ENCODE measurements at regions of chr19 and their contacts with region 1.

Region 1: DNA sequence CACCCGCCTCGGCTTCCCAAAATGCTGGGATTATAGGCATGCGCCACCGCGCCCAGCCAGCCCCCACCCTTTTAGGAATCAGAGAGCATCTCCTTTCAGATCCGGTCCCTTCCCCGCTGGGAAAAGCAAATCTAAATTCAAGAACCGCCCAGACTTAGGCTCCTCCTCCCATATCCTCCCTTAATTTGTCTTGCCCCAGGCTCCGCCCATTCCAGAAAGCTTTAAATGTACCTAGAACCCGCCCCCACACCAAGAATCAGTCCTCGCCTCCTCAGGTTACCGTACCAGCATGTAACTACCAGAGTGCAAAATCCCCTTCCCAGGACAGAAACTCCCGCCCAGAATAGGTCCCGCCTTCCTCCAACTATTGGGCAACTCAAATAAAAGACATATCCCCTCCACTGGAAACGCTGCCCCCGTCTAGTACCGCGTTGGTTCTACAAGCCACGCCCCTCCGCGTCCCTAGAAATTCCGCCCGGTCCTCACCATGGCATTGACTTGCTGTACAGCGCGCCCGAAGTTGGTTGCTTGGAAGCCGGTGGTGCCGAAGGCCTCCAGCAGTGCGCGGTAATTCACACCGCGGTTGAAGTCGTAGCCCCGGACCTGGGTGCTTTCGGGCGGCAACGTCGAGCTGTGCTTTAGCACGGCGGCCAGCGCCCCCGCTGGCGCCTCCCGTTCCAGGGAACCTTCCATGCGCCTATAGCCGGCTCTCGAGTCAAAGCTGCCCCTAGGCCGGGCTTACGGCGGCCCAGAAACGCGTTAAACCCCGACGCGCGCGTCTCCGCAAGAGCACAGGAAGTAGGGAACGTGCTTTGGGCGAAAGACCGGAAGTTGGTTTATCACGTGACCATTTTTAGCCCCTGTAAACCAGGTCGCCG is at the start of gene DHPS:
- DNase-seq: peak; percentile 76 to 99 (median 88)
- ATAC-seq: peak; percentile 78
- H3K4me3 ChIP-seq: peak within 1 kb of the TSS; percentile 93
- H3K4me3 Mint-ChIP-seq: peak within 1 kb of the TSS; percentile 94
- H3K27ac ChIP-seq: peak within 1 kb of the TSS; percentile 94 to 98
- H3K27ac Mint-ChIP-seq: peak within 1 kb of the TSS; percentile 86
- H3K4me1 ChIP-seq: peaks cover 40% of the 10 kb centered on the region
- H3K4me1 Mint-ChIP-seq: peaks cover 32% of the 10 kb centered on the region
- H3K27me3 ChIP-seq: no peaks in the 10 kb centered on the region
- H3K27me3 Mint-ChIP-seq: no peaks in the 10 kb centered on the region
- CTCF ChIP-seq: no peak
- total RNA-seq, gene DHPS: 112 to 113 TPM

Region 2: GRCh38 chr19:12166626-12167025 is 514.7 kb before region 1 on chr19:
- CTCF ChIA-PET with region 1: no interaction called
- POLR2A ChIA-PET with region 1: no interaction called
- intact Hi-C with region 1: no loop called
- DNase-seq: no peak
- ATAC-seq: no peak
- H3K4me3 ChIP-seq: no peak overlapping the region
- H3K4me3 Mint-ChIP-seq: peak overlapping the region; percentile 70
- H3K27ac ChIP-seq: no peak overlapping the region
- H3K27ac Mint-ChIP-seq: peak overlapping the region; percentile 89
- H3K4me1 ChIP-seq: peaks cover 38% of the 10 kb centered on the region
- H3K4me1 Mint-ChIP-seq: peaks cover 62% of the 10 kb centered on the region
- H3K27me3 ChIP-seq: no peaks in the 10 kb centered on the region
- H3K27me3 Mint-ChIP-seq: no peaks in the 10 kb centered on the region
- CTCF ChIP-seq: no peak

Region 3: DNA sequence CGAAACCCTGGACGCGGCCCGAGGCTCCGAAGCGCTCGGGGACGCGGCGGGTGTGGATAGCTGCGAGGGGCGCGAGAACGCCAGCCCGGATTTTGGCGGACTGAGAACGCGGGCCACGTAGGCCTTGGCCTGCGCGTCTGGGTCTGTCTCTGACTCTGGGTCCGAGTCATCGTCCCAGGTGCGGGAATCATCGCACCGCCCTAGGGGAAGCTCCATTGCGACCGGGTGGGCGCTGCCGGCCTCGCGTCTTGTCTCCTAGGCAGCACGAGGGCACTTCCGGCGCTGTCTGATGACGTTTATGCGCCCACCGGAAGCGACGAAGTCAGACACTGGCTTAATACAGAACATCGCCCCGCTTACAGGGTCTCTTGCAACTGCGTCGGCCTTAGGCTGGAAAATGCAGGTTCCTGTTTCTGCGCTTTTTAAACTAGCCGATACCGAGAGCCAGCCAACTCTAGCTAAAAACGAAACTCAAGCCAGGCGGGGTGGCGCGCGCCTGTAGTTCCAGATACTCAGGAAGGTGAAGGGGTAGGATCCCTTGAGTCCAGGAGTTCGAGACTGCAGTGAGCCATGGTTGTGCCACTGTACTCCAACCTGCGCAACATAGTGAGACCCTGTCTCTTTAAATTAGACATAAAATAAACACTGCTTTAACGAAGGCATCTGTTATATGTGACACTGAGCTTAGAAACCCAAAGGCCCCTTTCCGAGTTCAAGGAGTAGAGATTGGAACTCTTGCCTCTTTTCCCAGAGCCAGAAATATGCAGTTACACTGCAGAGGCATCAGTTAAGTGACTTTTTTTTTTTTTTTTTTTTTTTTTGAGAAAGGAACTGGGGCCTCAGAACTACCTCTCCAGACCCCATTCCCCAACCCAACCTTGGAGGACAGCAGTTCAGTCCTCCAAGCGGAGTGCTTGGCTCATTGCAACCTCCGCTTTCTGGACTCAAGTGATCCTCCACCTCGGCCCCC is 15.3 kb after region 1 on chr19 and contains the start of gene FBXW9:
- CTCF ChIA-PET with region 1: no interaction called
- POLR2A ChIA-PET with region 1: interaction called, 27 read pairs
- intact Hi-C with region 1: loop called (anchors 1 kb)
- DNase-seq: peak; percentile 93 to 99 (median 98)
- ATAC-seq: peak; percentile 89
- H3K4me3 ChIP-seq: peak within 1 kb of the TSS; percentile 98
- H3K4me3 Mint-ChIP-seq: peak within 1 kb of the TSS; percentile 92
- H3K27ac ChIP-seq: peak within 1 kb of the TSS; percentile 78 to 90
- H3K27ac Mint-ChIP-seq: peak within 1 kb of the TSS; percentile 95
- H3K4me1 ChIP-seq: peaks cover 23% of the 10 kb centered on the region
- H3K4me1 Mint-ChIP-seq: peaks cover 11% of the 10 kb centered on the region
- H3K27me3 ChIP-seq: no peaks in the 10 kb centered on the region
- H3K27me3 Mint-ChIP-seq: no peaks in the 10 kb centered on the region
- CTCF ChIP-seq: no peak
- total RNA-seq, gene FBXW9: 2.2 to 2.4 TPM

Region 4: GRCh38 chr19:12722566-12723380 is 41.5 kb after region 1 on chr19:
- CTCF ChIA-PET with region 1: interaction called, 8 read pairs
- POLR2A ChIA-PET with region 1: interaction called, 20 read pairs
- intact Hi-C with region 1: loop called (anchors 2 to 5 kb)
- DNase-seq: peak; percentile 80 to 99 (median 90)
- ATAC-seq: peak; percentile 87
- H3K4me3 ChIP-seq: peak overlapping the region; percentile 69
- H3K4me3 Mint-ChIP-seq: peak overlapping the region; percentile 98
- H3K27ac ChIP-seq: peak overlapping the region; percentile 48 to 78
- H3K27ac Mint-ChIP-seq: peak overlapping the region; percentile 89
- H3K4me1 ChIP-seq: peaks cover 39% of the 10 kb centered on the region
- H3K4me1 Mint-ChIP-seq: peaks cover 47% of the 10 kb centered on the region
- H3K27me3 ChIP-seq: no peaks in the 10 kb centered on the region
- H3K27me3 Mint-ChIP-seq: no peaks in the 10 kb centered on the region
- CTCF ChIP-seq: no peak

Region 5: DNA sequence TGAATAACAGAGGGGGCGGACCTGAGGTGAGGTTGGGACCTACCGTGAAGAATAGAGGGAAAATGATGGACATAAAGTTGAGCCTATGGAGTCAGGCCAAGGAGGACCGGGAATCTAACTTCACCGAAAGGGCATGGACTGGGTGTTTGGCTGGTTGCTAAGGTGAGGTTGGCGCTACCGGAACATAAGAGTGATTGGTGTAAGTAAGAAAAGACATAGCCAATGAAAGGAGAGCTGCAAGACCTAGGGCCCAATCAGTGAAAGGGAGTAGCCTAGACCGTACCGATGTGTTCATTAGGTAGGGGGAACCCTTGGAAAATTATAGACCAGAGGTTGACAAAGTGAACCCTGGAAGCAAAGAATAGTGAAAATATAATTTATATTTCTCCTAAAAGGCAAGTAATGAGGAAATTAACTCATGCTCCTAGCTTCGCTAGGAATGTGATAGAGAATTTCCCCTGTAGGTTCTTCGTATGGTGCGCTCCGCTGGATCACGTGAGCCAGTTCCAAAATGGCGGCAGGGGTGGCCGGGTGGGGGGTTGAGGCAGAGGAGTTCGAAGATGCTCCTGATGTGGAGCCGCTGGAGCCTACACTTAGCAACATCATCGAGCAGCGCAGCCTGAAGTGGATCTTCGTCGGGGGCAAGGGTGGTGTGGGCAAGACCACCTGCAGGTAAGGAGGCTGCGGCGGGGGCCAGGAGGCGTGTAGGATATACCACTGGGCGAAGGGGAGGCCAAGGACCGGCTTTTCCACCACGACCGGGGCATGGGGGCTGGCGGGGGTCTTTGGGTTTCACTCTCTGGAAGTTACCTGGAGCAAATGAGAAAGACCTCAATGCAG is 55.9 kb after region 1 on chr19 and contains the start of gene GET3:
- CTCF ChIA-PET with region 1: no interaction called
- POLR2A ChIA-PET with region 1: interaction called, 14 read pairs
- intact Hi-C with region 1: no loop called
- DNase-seq: peak; percentile 66 to 92 (median 74)
- ATAC-seq: peak; percentile 82
- H3K4me3 ChIP-seq: peak within 1 kb of the TSS; percentile 79
- H3K4me3 Mint-ChIP-seq: peak within 1 kb of the TSS; percentile 96
- H3K27ac ChIP-seq: peak within 1 kb of the TSS; percentile 76
- H3K27ac Mint-ChIP-seq: peak within 1 kb of the TSS; percentile 86
- H3K4me1 ChIP-seq: peaks cover 52% of the 10 kb centered on the region
- H3K4me1 Mint-ChIP-seq: peaks cover 38% of the 10 kb centered on the region
- H3K27me3 ChIP-seq: no peaks in the 10 kb centered on the region
- H3K27me3 Mint-ChIP-seq: no peaks in the 10 kb centered on the region
- CTCF ChIP-seq: no peak
- total RNA-seq, gene GET3: 13.9 to 14.5 TPM

Region 6: DNA sequence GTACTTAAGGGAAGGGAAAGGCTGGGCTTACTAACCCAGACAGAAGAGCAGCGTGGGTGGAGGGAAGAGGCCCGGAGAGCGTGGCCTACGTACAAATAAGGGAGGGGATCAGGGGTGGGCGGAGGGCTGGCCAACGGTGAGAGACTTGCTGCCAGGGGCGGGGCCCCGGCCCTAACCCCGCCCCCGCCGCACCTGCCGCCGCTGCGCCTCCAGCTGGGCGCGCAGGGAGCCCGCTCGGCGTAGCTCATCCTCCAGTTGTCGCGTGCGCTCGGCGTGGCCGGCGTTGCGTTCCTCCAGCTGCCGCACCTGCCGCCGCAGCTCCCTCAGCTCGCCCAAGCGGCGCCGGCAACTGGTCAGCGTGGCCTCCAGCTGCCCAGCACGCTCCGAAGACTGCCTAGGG is 88.4 kb after region 1 on chr19:
- CTCF ChIA-PET with region 1: no interaction called
- POLR2A ChIA-PET with region 1: no interaction called
- intact Hi-C with region 1: no loop called
- DNase-seq: peak in 13 of 14 experiments; percentile 35 to 87 (median 56)
- ATAC-seq: peak; percentile 86
- H3K4me3 ChIP-seq: no peak overlapping the region
- H3K4me3 Mint-ChIP-seq: peak overlapping the region; percentile 9
- H3K27ac ChIP-seq: no peak overlapping the region
- H3K27ac Mint-ChIP-seq: no peak overlapping the region
- H3K4me1 ChIP-seq: peaks cover 25% of the 10 kb centered on the region
- H3K4me1 Mint-ChIP-seq: peaks cover 14% of the 10 kb centered on the region
- H3K27me3 ChIP-seq: no peaks in the 10 kb centered on the region
- H3K27me3 Mint-ChIP-seq: no peaks in the 10 kb centered on the region
- CTCF ChIP-seq: no peak

Region 7: DNA sequence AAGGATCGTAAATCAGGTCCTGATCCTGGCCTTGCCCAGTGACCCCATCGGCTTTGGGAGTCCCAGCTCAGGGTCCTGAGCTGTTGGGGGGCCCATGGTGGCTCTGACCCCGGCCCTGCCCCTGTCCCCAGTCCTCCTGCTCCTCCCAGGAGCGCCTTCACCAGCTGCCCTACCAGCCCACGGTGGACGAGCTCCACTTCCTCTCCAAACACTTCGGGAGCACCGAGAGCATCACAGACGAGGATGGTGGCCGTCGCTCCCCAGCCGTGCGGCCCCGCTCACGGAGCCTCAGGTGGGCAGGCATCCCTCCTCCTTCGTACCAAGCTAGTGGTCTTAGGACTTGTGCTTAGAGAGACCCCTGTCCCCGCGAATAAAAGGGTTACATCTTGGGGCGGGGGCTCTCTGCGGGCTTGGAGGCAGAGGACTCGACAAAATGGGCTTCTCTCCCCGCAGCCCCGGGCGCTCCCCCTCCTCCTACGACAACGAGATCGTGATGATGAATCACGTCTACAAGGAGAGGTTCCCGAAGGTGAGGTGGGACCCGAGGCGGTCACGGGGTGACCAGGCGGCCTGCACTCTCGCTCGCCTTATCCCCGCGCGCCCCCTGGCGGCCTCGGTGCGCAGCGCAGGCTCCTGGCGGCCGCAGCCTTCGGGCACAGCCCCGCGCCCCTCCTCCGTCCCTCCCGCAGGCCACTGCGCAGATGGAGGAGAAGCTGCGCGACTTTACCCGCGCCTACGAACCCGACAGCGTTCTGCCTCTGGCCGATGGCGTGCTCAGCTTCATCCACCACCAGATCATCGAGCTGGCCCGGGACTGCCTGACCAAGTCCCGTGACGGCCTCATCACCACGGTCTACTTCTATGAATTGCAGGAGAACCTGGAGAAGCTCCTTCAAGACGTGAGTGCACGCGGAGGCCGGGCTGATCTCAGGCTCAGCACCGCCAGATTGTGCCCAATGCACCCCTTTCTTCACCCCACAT is 166.1 kb after region 1 on chr19:
- CTCF ChIA-PET with region 1: no interaction called
- POLR2A ChIA-PET with region 1: no interaction called
- intact Hi-C with region 1: loop called in 1 of 2 experiments (anchors 2 kb)
- DNase-seq: peak; percentile 59 to 88 (median 77)
- ATAC-seq: peak; percentile 95
- H3K4me3 ChIP-seq: peak overlapping the region; percentile 31
- H3K4me3 Mint-ChIP-seq: no peak overlapping the region
- H3K27ac ChIP-seq: no peak overlapping the region
- H3K27ac Mint-ChIP-seq: no peak overlapping the region
- H3K4me1 ChIP-seq: peaks cover 11% of the 10 kb centered on the region
- H3K4me1 Mint-ChIP-seq: no peaks in the 10 kb centered on the region
- H3K27me3 ChIP-seq: peaks cover 29 to 41% of the 10 kb centered on the region in 2 experiments
- H3K27me3 Mint-ChIP-seq: peaks cover 43% of the 10 kb centered on the region
- CTCF ChIP-seq: peak; percentile 99

Measured in CD4-positive, alpha-beta T cell (primary cell).